ENCODE measurements at regions of chr19 and their contacts with region 1.

Region 1: GRCh38 chr19:34041925-34042521 is 130.3 kb upstream of the LSM14A start:
- DNase-seq: peak; percentile 19 to 89 (median 54)
- ATAC-seq: peak; percentile 89
- H3K4me3 ChIP-seq: no peak overlapping the region
- H3K27ac ChIP-seq: no peak overlapping the region
- H3K4me1 ChIP-seq: no peaks in the 10 kb centered on the region
- H3K27me3 ChIP-seq: no peaks in the 10 kb centered on the region
- CTCF ChIP-seq: peak; percentile 81 to 95

Region 2: GRCh38 chr19:33977756-33978685 is 64.0 kb before region 1 on chr19:
- intact Hi-C with region 1: no loop called
- DNase-seq: no peak
- ATAC-seq: no peak
- H3K4me3 ChIP-seq: no peak overlapping the region
- H3K27ac ChIP-seq: no peak overlapping the region
- H3K4me1 ChIP-seq: no peaks in the 10 kb centered on the region
- H3K27me3 ChIP-seq: peaks cover 0 to 9% of the 10 kb centered on the region in 2 donors
- CTCF ChIP-seq: no peak

Region 3: GRCh38 chr19:34145741-34146202 is 103.7 kb after region 1 on chr19:
- intact Hi-C with region 1: loop called in 1 of 2 experiments (anchors 10 kb)
- DNase-seq: peak in 2 of 4 donors; percentile 42 to 66
- ATAC-seq: peak; percentile 86
- H3K4me3 ChIP-seq: no peak overlapping the region
- H3K27ac ChIP-seq: no peak overlapping the region
- H3K4me1 ChIP-seq: no peaks in the 10 kb centered on the region
- H3K27me3 ChIP-seq: no peaks in the 10 kb centered on the region
- CTCF ChIP-seq: peak; percentile 67 to 68

Measured in left lung (tissue), 14 donors.